PC-3 (cell line): ENCODE measurements at regions of chr10 and their contacts with region 1.

Region 1: DNA sequence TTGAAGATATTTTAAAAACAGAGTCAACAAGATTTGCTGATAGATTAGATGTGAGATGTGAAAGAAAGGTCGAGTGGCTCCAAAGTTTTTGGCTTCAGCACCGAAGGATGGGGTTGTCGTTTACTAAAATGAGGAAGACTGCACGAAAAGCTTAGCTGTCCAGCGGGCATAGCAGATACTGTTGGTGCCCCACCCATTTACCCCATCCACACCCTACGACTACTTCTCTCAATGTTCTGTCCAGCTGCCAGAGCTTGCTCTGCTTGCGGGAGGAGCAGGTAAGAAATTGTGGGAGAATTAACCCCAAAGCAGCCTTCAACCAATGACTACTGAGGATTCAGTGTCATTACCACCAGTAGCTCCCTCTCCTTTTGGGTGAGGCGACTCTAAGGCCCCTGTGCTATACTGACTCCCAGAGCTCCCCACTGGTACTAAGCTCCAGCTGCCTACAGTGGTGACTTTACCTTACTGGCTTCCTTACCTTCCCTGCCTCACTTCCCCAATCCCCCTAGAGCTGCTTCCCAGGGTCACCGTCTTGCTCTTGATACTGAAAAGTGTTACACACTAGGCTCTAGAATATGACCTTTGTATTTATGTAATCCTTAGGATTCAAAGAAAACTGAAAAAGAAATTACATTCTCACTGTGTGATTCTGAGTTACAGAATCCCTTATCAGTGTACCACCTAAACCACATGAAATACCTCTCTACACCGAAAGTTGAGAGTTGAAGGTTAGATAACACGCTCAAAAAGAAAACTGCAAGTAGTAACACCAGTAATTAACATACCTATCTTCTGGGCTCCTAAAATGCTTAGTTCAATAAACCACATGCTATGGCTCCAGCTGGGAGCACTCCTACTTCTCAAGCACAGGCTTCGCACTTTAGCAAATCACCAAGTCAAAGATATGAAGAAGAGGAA is 22.3 kb downstream of the CACUL1 start:
- DNase-seq: no peak
- ATAC-seq: no peak
- H3K4me3 ChIP-seq: no peak overlapping the region
- H3K27ac ChIP-seq: no peak overlapping the region
- H3K4me1 ChIP-seq: peaks cover 13% of the 10 kb centered on the region
- H3K27me3 ChIP-seq: no peaks in the 10 kb centered on the region
- CTCF ChIP-seq: no peak

Region 2: DNA sequence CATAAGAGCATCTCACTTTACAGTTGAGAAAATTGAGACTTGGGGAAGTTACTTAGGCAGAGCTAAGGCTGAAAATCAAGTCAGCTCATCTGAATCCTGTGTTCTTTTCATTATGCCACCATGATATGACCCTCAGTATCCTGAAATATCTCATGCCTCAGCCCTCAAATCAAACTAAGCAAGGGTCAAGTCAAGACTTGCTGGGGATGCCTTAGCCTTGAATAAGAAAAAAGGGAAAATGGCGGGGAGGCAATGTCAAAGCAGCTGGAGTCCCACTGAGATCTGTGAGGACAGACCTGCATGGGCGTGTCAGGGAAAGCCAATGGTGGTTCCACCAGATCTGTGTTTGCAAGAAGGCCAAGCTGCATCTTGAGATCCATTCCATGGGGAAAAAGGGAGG is 113.3 kb after region 1 on chr10:
- CTCF ChIA-PET with region 1: no interaction called
- POLR2A ChIA-PET with region 1: interaction called, 13 read pairs
- intact Hi-C with region 1: no loop called
- DNase-seq: no peak
- ATAC-seq: no peak
- H3K4me3 ChIP-seq: no peak overlapping the region
- H3K27ac ChIP-seq: no peak overlapping the region
- H3K4me1 ChIP-seq: peaks cover 11% of the 10 kb centered on the region
- H3K27me3 ChIP-seq: no peaks in the 10 kb centered on the region
- CTCF ChIP-seq: no peak

Region 3: DNA sequence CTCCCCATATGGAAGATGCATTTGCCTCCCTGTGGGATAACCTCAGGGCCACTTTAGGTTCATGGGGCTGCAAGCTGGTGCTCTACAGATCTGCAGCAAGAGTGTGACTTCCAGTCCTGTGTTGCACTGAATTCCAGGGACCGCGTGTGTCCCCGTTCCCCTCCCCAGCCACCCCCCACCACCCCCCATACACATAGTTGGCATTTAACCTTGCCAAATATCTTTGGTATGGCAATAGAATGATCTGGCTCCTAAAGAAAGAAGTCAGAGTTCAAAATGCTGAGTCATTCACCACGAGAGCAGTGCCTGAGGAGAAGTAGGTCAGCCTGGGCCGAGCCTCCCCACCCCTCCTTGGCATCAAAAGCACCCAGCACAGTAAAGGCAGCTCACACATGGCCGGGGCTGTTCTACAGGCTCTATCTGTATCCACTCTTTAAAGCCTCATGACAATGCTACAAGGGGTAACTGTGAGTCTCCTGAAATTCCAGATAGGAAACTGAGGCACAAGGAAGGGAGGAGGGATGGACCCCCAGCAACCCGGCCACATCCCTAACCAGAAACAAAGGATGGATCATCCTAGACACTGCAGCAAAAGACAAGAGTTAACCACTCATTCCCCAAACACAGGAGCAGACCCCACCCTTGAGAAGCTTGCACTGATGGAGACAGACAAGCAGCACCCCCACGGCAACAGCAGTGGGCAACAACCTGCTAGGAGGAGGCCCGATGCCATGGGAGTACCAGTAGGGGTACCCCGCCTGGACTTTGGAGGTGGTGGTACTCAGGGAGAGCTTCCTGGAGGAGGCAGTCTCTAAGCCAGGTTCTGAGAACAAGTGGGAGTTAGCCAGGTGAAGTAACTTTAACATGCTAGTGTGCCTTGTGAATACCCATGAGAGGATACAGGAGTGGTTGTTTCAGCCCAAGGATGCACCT is 226.7 kb after region 1 on chr10:
- CTCF ChIA-PET with region 1: no interaction called
- POLR2A ChIA-PET with region 1: no interaction called
- intact Hi-C with region 1: no loop called
- DNase-seq: peak; percentile 79
- ATAC-seq: peak; percentile 76
- H3K4me3 ChIP-seq: no peak overlapping the region
- H3K27ac ChIP-seq: peak overlapping the region; percentile 72
- H3K4me1 ChIP-seq: peaks cover 36% of the 10 kb centered on the region
- H3K27me3 ChIP-seq: no peaks in the 10 kb centered on the region
- CTCF ChIP-seq: no peak